Right lobe of liver (tissue), 6 donors: ENCODE measurements at regions of chr14 and their contacts with region 1.

Region 1: GRCh38 chr14:23478111-23478759 is 8.7 kb downstream of the NGDN start:
- DNase-seq: no peak
- ATAC-seq: peak; percentile 54 to 76 (median 72)
- H3K4me3 ChIP-seq: no peak overlapping the region
- H3K27ac ChIP-seq: no peak overlapping the region
- H3K4me1 ChIP-seq: no peaks in the 10 kb centered on the region
- H3K27me3 ChIP-seq: no peaks in the 10 kb centered on the region
- CTCF ChIP-seq: peak; percentile 61 to 74 (median 70)
- POLR2A ChIP-seq: no peak

Region 2: GRCh38 chr14:23275412-23275811 is 202.8 kb before region 1 on chr14:
- intact Hi-C with region 1: no loop called
- DNase-seq: no peak
- ATAC-seq: no peak
- H3K4me3 ChIP-seq: no peak overlapping the region
- H3K27ac ChIP-seq: no peak overlapping the region
- H3K4me1 ChIP-seq: no peaks in the 10 kb centered on the region
- H3K27me3 ChIP-seq: no peaks in the 10 kb centered on the region
- CTCF ChIP-seq: no peak
- POLR2A ChIP-seq: no peak

Region 3: GRCh38 chr14:23379366-23380196 is 98.7 kb before region 1 on chr14:
- intact Hi-C with region 1: no loop called
- DNase-seq: peak; percentile 76 to 82 (median 78)
- ATAC-seq: peak; percentile 90 to 98 (median 96)
- H3K4me3 ChIP-seq: no peak overlapping the region
- H3K27ac ChIP-seq: no peak overlapping the region
- H3K4me1 ChIP-seq: no peaks in the 10 kb centered on the region
- H3K27me3 ChIP-seq: no peaks in the 10 kb centered on the region
- CTCF ChIP-seq: peak; percentile 90 to 95 (median 94)
- POLR2A ChIP-seq: no peak

Region 4: GRCh38 chr14:23562268-23563203 is 84.3 kb after region 1 on chr14:
- intact Hi-C with region 1: loop called (anchors 2 to 5 kb)
- DNase-seq: no peak
- ATAC-seq: peak; percentile 31 to 47 (median 40)
- H3K4me3 ChIP-seq: no peak overlapping the region
- H3K27ac ChIP-seq: peak overlapping the region in 1 of 3 donors; percentile 61
- H3K4me1 ChIP-seq: peaks cover 0 to 18% (median 4%) of the 10 kb centered on the region in 4 donors
- H3K27me3 ChIP-seq: no peaks in the 10 kb centered on the region
- CTCF ChIP-seq: peak; percentile 80 to 87 (median 84)
- POLR2A ChIP-seq: no peak

Region 5: DNA sequence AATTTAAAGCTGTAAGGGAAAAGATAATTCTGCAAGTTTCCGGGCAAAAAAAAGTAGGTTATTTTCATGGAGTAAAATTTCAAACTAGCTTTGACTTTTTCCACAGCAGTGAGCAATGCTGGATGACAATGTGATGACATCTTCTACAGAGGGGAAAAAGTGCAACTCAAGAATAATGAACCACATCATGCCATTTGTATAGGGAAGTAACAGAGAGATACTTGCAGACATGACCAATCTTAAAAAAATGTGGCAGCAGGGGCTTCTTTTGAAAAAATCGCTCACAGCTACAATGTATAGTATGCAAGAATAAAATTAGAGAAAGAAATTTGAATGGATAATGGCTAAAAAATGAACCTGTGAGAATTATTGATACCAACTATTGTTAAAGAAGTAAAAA is 273.4 kb after region 1 on chr14:
- intact Hi-C with region 1: no loop called
- DNase-seq: no peak
- ATAC-seq: no peak
- H3K4me3 ChIP-seq: no peak overlapping the region
- H3K27ac ChIP-seq: no peak overlapping the region
- H3K4me1 ChIP-seq: no peaks in the 10 kb centered on the region
- H3K27me3 ChIP-seq: no peaks in the 10 kb centered on the region
- CTCF ChIP-seq: no peak
- POLR2A ChIP-seq: no peak